KBM-7 (cell line): ENCODE measurements at regions of chr12 and their contacts with region 1.

Region 1: DNA sequence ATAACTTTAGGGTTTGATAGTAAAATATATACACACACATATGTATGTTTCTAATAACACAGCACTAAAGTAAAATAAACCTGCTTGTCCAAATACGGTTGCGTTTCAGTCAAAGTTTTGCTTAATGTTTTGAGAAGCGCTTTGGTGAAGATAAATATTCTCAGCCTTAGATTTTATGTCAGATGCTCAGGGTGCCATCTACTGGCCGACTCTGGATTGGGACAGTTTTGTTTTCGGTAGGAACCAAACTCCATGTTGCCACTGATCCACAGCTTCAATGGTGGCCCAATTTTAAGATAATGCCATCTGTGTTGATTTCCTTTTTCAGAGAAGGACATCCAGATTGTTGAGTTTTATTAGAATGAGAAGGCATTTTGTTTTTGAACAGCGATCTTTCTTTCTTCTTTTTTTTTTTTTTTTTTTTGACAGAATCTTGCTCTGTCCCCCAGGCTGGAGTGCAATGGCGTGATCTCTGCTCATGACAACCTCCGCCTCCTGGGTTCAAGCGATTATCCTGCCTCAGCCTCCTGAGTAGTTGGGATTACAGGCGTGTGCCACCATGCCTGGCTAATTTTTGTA is 43.1 kb downstream of the LLPH start:
- DNase-seq: peak; percentile 73

Region 2: GRCh38 chr12:65306366-65307168 is 780.9 kb before region 1 on chr12:
- in situ Hi-C with region 1: loop called (anchors 25 kb)
- DNase-seq: peak; percentile 82

Region 3: DNA sequence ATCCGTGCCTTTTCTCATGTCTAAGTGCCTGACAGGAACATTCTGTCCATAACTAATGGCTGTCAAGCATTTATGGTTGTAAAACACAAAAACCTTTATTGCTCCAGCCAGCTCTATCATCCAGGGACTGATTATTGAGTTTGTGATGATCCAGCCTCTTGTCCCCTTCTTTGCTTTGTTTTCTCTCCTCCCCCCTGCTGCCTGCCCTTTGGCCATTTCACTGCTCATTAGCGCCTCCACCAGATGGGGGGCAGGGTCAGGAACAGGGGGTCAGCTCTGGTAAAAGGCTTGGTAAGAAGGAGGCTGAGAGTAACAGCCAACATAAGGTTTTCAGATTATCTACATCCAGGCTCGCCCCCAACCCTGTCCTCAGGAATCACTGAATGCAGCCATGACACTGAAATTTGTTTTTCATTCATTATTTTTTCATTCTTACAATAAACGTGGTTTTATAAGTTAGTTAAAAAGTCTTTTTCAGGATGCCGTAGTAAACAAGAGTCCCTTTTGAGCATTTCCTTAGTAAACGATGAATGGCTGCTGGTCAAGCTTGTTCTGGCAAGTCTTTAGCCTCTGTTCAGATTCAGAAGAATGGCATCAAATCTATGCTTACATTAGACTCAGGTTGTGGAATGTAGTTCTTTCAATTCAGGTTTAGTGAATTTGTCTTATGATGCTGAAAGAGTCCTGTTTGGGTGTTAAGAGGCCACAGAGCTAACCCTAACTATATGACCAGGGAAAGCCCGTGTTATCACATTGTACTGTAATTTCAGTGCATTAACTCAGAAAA is 241.5 kb before region 1 on chr12:
- in situ Hi-C with region 1: no loop called
- DNase-seq: no peak